ENCODE measurements at regions of chr1 and their contacts with region 1.

Region 1: GRCh38 chr1:203649999-203650855 is 23.6 kb downstream of the ATP2B4 start:
- DNase-seq: peak; percentile 76
- H3K4me3 Mint-ChIP-seq: peak overlapping the region; percentile 62
- H3K27ac Mint-ChIP-seq: peak overlapping the region; percentile 46
- H3K4me1 Mint-ChIP-seq: peaks cover 67% of the 10 kb centered on the region
- H3K27me3 Mint-ChIP-seq: no peaks in the 10 kb centered on the region

Region 2: GRCh38 chr1:203512830-203513611 is 137.2 kb before region 1 on chr1:
- CTCF ChIA-PET with region 1: no interaction called
- intact Hi-C with region 1: loop called (anchors 1 kb)
- DNase-seq: peak; percentile 83
- H3K4me3 Mint-ChIP-seq: peak overlapping the region; percentile 42
- H3K27ac Mint-ChIP-seq: peak overlapping the region; percentile 82
- H3K4me1 Mint-ChIP-seq: peaks cover 36% of the 10 kb centered on the region
- H3K27me3 Mint-ChIP-seq: no peaks in the 10 kb centered on the region

Region 3: DNA sequence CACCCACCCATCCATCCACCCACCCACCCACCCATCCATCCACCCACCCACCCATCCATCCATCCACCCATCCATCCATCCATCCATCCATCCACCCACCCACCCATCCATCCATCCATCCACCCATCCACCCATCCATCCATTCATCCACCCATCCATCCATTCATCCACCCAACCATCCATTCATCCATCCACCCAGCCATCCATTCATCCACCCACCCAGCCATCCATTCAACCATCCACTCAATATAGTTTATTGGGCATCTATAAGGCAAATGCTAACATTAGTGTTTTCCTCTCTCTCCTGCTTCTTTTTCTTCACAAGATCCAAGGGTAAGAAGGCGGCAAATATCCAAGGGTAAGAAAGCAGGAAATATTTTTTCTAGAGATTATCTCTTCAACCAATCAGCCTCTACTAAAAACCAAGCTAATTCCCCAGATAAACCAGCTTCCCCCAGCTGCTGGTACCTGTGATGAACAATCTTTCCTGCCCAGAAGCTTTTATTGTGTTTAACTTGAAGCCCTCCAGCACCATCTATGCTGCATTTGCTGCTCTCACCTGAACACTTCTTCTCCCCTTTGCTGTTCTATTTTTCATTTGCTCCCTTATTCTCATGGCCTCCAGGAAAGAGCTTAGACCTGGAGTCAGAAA is 46.2 kb before region 1 on chr1:
- CTCF ChIA-PET with region 1: no interaction called
- intact Hi-C with region 1: loop called (anchors 1 kb)
- DNase-seq: no peak
- H3K4me3 Mint-ChIP-seq: no peak overlapping the region
- H3K27ac Mint-ChIP-seq: no peak overlapping the region
- H3K4me1 Mint-ChIP-seq: peaks cover 32% of the 10 kb centered on the region
- H3K27me3 Mint-ChIP-seq: no peaks in the 10 kb centered on the region

Region 4: GRCh38 chr1:203663294-203663693 is 13.1 kb after region 1 on chr1:
- CTCF ChIA-PET with region 1: interaction called, 9 read pairs
- intact Hi-C with region 1: loop called (anchors 1 kb)
- DNase-seq: peak; percentile 40
- H3K4me3 Mint-ChIP-seq: no peak overlapping the region
- H3K27ac Mint-ChIP-seq: no peak overlapping the region
- H3K4me1 Mint-ChIP-seq: peaks cover 28% of the 10 kb centered on the region
- H3K27me3 Mint-ChIP-seq: no peaks in the 10 kb centered on the region

Region 5: DNA sequence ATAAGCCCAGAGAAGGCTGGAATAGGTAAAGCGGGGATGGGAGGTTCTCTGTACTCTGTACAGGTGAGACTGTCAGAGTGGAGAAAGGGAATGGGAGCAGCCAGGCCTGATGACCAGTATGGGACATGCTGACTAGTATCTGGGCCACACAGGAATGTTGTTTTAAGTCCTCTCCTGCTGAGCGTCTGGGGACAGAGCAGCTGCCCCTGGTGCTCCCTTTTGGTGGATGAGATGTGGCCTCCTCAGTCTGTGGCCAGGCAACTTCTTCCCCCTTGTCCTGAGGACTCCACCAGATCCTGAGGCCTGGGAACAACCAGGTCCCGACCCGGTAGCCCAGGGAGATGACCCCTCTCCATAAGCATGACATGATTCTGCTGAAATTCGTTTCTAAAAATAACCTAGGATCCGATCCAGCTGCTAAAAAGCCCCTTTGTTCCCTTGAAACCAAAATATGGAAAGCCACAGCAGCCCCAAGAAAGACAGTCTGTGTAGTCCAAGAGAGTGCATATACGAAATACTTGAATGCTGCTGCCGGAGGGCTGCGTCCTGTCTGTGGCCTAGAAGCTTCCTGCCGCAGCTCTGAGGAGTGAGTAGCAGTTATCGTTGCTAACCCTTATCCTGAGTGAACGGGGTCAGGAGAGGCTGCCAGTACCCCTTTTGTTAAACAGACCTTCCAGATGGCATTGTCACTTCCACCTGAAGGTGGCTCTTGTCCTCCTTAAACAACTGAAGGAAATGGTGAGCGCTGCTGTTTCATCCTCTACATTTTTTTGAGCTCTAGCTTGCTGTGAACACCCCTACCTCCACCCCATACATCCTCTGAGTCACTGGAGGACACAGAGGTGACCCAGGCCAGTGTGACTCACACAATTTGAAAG is 23.6 kb after region 1 on chr1:
- CTCF ChIA-PET with region 1: interaction called, 15 read pairs
- intact Hi-C with region 1: loop called (anchors 1 kb)
- DNase-seq: peak; percentile 84
- H3K4me3 Mint-ChIP-seq: peak overlapping the region; percentile 33
- H3K27ac Mint-ChIP-seq: peak overlapping the region; percentile 77
- H3K4me1 Mint-ChIP-seq: peaks cover 45% of the 10 kb centered on the region
- H3K27me3 Mint-ChIP-seq: no peaks in the 10 kb centered on the region

Region 6: DNA sequence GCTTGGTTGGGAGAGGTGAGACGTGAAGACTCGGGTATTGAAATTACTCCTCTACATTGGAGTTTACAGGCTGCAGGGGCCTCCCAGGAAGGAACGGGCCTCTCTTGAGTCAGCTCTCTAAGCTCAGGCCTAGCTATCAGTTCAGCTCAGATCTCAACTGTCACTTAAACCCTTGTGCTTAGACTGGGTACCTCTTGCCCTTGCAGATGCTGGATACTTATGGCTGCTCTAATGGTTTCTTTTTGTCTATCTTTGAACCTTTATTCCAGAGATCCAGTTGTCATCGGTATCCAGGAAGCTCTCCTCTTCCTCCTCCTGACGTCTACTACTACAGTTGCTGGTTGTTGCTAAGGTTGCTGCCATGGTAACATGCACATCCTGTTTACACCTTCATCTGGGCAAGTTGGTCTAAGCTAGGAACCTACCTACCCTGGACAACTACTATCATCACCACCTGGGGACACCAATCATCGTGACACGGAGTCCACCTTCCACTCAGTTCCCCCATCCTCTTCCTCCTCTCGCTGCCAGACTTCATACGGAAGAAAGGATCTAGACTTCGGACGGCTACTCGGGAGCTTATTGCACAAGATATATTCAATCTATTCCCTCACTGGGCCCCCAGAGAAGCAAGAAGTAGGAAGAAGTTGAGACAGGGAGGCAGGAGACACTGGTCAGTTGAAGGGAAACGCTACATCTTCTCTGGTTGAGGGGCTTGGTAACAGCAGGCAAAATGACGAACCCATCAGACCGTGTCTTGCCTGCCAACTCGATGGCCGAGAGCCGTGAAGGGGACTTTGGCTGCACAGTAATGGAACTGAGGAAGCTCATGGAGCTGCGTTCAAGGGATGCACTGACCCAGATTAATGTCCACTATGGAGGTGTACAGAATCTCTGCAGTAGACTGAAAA is 32.5 kb after region 1 on chr1:
- CTCF ChIA-PET with region 1: interaction called, 8 read pairs
- intact Hi-C with region 1: loop called (anchors 1 kb)
- DNase-seq: peak; percentile 71
- H3K4me3 Mint-ChIP-seq: peak overlapping the region; percentile 44
- H3K27ac Mint-ChIP-seq: peak overlapping the region; percentile 79
- H3K4me1 Mint-ChIP-seq: peaks cover 26% of the 10 kb centered on the region
- H3K27me3 Mint-ChIP-seq: no peaks in the 10 kb centered on the region